Naive thymus-derived CD4-positive, alpha-beta T cell (primary cell): ENCODE measurements at regions of chr15 and their contacts with region 1.

Region 1: DNA sequence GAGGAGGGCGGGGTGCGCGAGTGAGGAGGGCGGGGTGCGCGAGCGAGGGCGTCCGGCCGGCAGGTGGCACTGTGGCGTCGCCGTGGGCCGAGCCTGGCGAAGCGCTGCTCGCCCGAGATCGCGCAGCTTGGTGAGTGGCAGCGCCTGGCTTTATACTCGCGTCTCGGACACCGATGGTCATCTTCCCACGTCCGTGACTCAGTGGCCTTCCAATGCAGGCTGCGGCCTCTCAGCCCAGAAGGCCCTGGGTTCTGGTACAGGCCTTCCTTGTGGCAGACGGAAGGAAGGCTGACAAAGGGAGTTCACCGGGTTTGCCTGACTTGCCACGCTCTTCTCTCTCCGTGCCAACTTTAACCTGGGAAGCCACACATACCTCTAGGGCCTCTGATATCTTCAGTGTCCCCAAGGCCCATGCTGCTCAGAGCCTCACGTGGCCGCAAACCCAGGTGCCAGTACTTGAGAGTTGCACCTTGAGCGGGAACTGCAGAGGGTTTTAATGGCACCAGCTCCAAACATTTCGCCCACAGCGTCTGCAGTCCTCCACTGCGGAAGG is 195.3 kb upstream of the LYSMD4 start:
- DNase-seq: peak; percentile 68 to 93 (median 91)
- ATAC-seq: peak; percentile 97
- H3K4me3 ChIP-seq: peak overlapping the region; percentile 56
- H3K4me3 Mint-ChIP-seq: peak overlapping the region; percentile 79 to 92 (median 88)
- H3K27ac ChIP-seq: peak overlapping the region; percentile 76
- H3K27ac Mint-ChIP-seq: peak overlapping the region; percentile 80 to 95 (median 89)
- H3K4me1 ChIP-seq: peaks cover 12 to 17% of the 10 kb centered on the region in 2 donors
- H3K4me1 Mint-ChIP-seq: peaks cover 13 to 28% (median 19%) of the 10 kb centered on the region in 7 donors
- H3K27me3 ChIP-seq: no peaks in the 10 kb centered on the region
- H3K27me3 Mint-ChIP-seq: peaks cover 0 to 27% (median 0%) of the 10 kb centered on the region in 5 donors

Region 2: GRCh38 chr15:99250494-99251435 is 677.7 kb before region 1 on chr15:
- CTCF ChIA-PET with region 1: no interaction called
- POLR2A ChIA-PET with region 1: interaction called, 4 read pairs
- intact Hi-C with region 1: loop called (anchors 5 kb)
- DNase-seq: peak; percentile 78 to 95 (median 92)
- ATAC-seq: peak; percentile 96
- H3K4me3 ChIP-seq: peak overlapping the region; percentile 76
- H3K4me3 Mint-ChIP-seq: peak overlapping the region in 8 of 10 donors; percentile 81 to 95 (median 92)
- H3K27ac ChIP-seq: peak overlapping the region; percentile 65
- H3K27ac Mint-ChIP-seq: peak overlapping the region; percentile 83 to 92 (median 90)
- H3K4me1 ChIP-seq: peaks cover 14 to 28% of the 10 kb centered on the region in 2 donors
- H3K4me1 Mint-ChIP-seq: peaks cover 24 to 32% (median 27%) of the 10 kb centered on the region in 7 donors
- H3K27me3 ChIP-seq: no peaks in the 10 kb centered on the region
- H3K27me3 Mint-ChIP-seq: no peaks in the 10 kb centered on the region

Region 3: GRCh38 chr15:99818872-99819271 is 109.6 kb before region 1 on chr15:
- CTCF ChIA-PET with region 1: no interaction called
- POLR2A ChIA-PET with region 1: no interaction called
- intact Hi-C with region 1: loop called in 1 of 2 experiments (anchors 5 kb)
- DNase-seq: no peak
- ATAC-seq: no peak
- H3K4me3 ChIP-seq: no peak overlapping the region
- H3K4me3 Mint-ChIP-seq: no peak overlapping the region
- H3K27ac ChIP-seq: no peak overlapping the region
- H3K27ac Mint-ChIP-seq: no peak overlapping the region
- H3K4me1 ChIP-seq: no peaks in the 10 kb centered on the region
- H3K4me1 Mint-ChIP-seq: peaks cover 0 to 3% (median 0%) of the 10 kb centered on the region in 7 donors
- H3K27me3 ChIP-seq: no peaks in the 10 kb centered on the region
- H3K27me3 Mint-ChIP-seq: no peaks in the 10 kb centered on the region

Region 4: GRCh38 chr15:100572362-100572983 is 644.0 kb after region 1 on chr15:
- CTCF ChIA-PET with region 1: interaction called, 3 read pairs
- POLR2A ChIA-PET with region 1: interaction called, 3 read pairs
- intact Hi-C with region 1: loop called in 1 of 2 experiments (anchors 2 kb)
- DNase-seq: peak in 6 of 9 donors; percentile 22 to 52 (median 47)
- ATAC-seq: peak; percentile 67
- H3K4me3 ChIP-seq: peak overlapping the region; percentile 5
- H3K4me3 Mint-ChIP-seq: peak overlapping the region; percentile 34 to 86 (median 80)
- H3K27ac ChIP-seq: peak overlapping the region; percentile 65
- H3K27ac Mint-ChIP-seq: peak overlapping the region; percentile 84 to 99 (median 94)
- H3K4me1 ChIP-seq: peaks cover 0 to 36% of the 10 kb centered on the region in 2 donors
- H3K4me1 Mint-ChIP-seq: peaks cover 22 to 83% (median 70%) of the 10 kb centered on the region in 7 donors
- H3K27me3 ChIP-seq: no peaks in the 10 kb centered on the region
- H3K27me3 Mint-ChIP-seq: no peaks in the 10 kb centered on the region

Region 5: DNA sequence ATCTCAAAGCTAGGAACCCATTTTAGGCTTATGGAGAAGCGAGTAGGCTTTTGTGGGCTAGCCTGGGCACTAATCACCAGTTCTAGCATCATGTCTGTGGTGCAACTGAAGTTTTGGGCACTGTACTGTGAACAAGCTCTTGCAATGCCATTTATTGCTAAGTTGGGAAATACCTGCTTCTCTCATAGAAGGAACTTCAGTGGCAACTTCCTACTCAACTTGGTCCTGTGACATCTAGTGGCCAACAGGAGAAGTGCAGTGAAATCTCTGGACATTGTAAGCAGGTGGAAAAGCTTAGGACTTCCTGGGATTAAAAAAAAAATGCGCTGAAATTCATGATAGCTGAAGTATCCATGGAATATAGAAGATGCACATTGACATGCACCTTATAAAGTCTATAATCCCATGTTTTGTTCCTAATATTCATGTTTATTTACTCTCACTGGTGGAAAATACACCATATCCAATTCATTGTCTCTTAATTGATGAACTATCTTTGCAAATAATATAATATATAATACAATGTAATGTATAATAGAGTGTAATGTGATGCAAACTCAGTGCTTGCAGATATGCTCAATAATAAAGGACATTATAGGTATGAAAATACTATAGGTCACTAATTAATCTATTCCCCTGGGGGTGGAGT is 944.6 kb after region 1 on chr15:
- CTCF ChIA-PET with region 1: no interaction called
- POLR2A ChIA-PET with region 1: no interaction called
- intact Hi-C with region 1: loop called (anchors 5 kb)
- DNase-seq: peak in 8 of 9 donors; percentile 10 to 59 (median 48)
- ATAC-seq: peak; percentile 83
- H3K4me3 ChIP-seq: no peak overlapping the region
- H3K4me3 Mint-ChIP-seq: no peak overlapping the region
- H3K27ac ChIP-seq: no peak overlapping the region
- H3K27ac Mint-ChIP-seq: no peak overlapping the region
- H3K4me1 ChIP-seq: no peaks in the 10 kb centered on the region
- H3K4me1 Mint-ChIP-seq: no peaks in the 10 kb centered on the region
- H3K27me3 ChIP-seq: peaks cover 0 to under 1% of the 10 kb centered on the region in 2 donors
- H3K27me3 Mint-ChIP-seq: peaks cover 14 to 43% (median 27%) of the 10 kb centered on the region in 5 donors

Region 6: DNA sequence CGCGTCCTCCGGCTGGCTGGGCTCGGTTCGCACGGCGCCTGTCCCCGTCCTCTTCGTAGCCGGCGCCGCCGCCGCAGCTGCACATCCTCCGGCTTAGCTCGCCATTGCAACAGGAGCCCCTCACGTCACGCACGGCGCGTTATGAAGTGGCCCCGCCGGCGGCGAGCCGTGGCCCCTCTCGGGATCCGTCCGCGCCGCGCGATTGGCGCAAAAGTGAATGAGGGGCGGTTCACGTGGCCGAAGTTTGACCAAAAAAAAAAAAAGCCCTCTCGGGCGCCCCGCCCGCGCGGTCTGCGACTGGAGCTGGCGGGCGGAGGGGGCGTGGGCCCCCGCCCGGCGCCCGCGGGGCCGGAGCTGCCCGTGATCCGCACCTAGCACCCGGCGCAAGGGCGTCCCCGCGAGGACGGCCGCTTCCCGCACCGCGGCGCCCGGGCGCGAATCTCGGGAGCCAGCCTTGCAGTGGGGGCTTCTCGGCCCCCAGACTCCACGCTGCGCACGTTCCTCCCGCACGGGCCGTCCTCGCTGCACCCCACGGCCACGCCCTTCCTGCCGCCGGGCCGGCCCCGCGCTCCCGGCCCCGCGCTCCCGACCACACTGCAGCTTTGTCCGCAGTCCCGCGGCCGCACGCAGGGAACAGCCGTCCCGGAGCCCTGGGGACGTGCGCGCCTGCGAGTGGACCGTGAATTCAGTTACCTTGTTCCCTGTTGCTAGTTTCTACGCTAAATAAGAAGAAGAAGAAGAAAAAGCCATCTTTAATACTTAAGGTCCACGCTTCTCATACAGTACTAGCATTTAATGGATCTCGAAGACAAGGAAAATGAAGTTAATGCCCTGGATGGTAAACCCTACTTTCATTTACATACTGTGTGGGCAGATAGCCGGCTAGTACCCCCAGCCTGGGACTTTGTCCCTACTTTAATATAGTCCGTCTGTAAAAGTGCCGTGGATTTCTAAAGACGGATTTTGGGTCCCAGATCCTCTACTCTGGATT is 1323.6 kb after region 1 on chr15 and contains the start of gene CHSY1:
- CTCF ChIA-PET with region 1: no interaction called
- POLR2A ChIA-PET with region 1: no interaction called
- intact Hi-C with region 1: loop called in 1 of 2 experiments (anchors 5 kb)
- DNase-seq: peak; percentile 71 to 91 (median 81)
- ATAC-seq: peak; percentile 91
- H3K4me3 ChIP-seq: peak within 1 kb of the TSS; percentile 64
- H3K4me3 Mint-ChIP-seq: peak within 1 kb of the TSS; percentile 84 to 97 (median 94)
- H3K27ac ChIP-seq: peak within 1 kb of the TSS; percentile 62
- H3K27ac Mint-ChIP-seq: peak within 1 kb of the TSS; percentile 77 to 96 (median 84)
- H3K4me1 ChIP-seq: peaks cover 17 to 21% of the 10 kb centered on the region in 2 donors
- H3K4me1 Mint-ChIP-seq: peaks cover 17 to 63% (median 37%) of the 10 kb centered on the region in 7 donors
- H3K27me3 ChIP-seq: no peaks in the 10 kb centered on the region
- H3K27me3 Mint-ChIP-seq: no peaks in the 10 kb centered on the region
- total RNA-seq, gene CHSY1: 8.9 to 47.0 (median 10.8) TPM

Region 7: GRCh38 chr15:101723874-101724674 is 1795.6 kb after region 1 on chr15 and contains the start of gene TARS3:
- CTCF ChIA-PET with region 1: no interaction called
- POLR2A ChIA-PET with region 1: no interaction called
- intact Hi-C with region 1: loop called in 1 of 2 experiments (anchors 10 kb)
- DNase-seq: peak; percentile 84 to 97 (median 90)
- ATAC-seq: peak; percentile 97
- H3K4me3 ChIP-seq: peak within 1 kb of the TSS; percentile 77
- H3K4me3 Mint-ChIP-seq: peak within 1 kb of the TSS; percentile 79 to 97 (median 91)
- H3K27ac ChIP-seq: peak within 1 kb of the TSS; percentile 88
- H3K27ac Mint-ChIP-seq: peak within 1 kb of the TSS; percentile 83 to 97 (median 91)
- H3K4me1 ChIP-seq: peaks cover 5 to 11% of the 10 kb centered on the region in 2 donors
- H3K4me1 Mint-ChIP-seq: peaks cover 16 to 42% (median 35%) of the 10 kb centered on the region in 7 donors
- H3K27me3 ChIP-seq: no peaks in the 10 kb centered on the region
- H3K27me3 Mint-ChIP-seq: peaks cover 0 to 3% (median 0%) of the 10 kb centered on the region in 5 donors
- total RNA-seq, gene TARS3: 20.5 to 42.6 (median 23.6) TPM